ENCODE measurements at regions of chr4 and their contacts with region 1.

Region 1: GRCh38 chr4:98467627-98468072 is 190.8 kb downstream of the TSPAN5 start:
- DNase-seq: peak; percentile 56 to 85 (median 62)
- ATAC-seq: peak; percentile 97
- H3K4me3 ChIP-seq: peak overlapping the region; percentile 11; the same call in 1 of the 2 replicates
- H3K27ac ChIP-seq: no peak overlapping the region
- H3K4me1 ChIP-seq: no peaks in the 10 kb centered on the region; a peak in 3 of 5 replicates
- H3K27me3 ChIP-seq: no peaks in the 10 kb centered on the region
- CTCF ChIP-seq: peak; percentile 75 to 83 (median 83)
- EP300 ChIP-seq: no peak
- POLR2A ChIP-seq: no peak
- RAD21 ChIP-seq: peak; percentile 86 to 87

Region 2: DNA sequence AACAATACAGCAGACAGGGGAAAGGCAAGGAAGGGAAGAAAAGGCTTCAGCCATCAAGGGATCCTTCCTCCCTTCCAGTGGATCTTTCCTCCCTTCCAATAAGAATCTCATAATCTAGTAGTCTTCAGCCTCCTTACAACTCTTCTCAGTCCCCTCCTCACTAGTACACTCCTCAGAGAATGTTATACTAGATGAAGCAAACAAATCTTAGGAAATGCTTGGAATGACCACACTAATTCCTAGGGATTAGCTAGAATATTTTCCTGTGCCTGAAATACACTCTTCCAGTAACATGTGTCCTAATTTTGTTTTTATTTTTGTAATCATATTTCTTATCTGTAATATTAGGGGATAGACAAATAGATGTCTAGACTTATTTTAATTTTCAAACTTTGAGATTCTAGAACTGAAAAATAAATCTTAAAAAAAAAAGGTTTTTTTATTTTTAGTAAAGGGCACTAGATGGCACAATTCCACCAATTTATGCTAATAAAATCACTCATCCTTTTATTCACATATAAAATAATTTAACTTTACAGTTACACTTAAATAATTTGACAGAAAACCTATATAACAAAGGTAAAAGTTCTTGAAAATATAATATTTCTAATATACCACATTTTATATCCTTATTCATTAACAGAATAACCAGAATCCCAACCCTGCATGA is 317.4 kb before region 1 on chr4:
- CTCF ChIA-PET with region 1: no interaction called
- POLR2A ChIA-PET with region 1: no interaction called
- in situ Hi-C with region 1: no loop called
- intact Hi-C with region 1: loop called (anchors 10 kb)
- DNase-seq: no peak
- ATAC-seq: no peak
- H3K4me3 ChIP-seq: no peak overlapping the region
- H3K27ac ChIP-seq: no peak overlapping the region
- H3K4me1 ChIP-seq: no peaks in the 10 kb centered on the region
- H3K27me3 ChIP-seq: no peaks in the 10 kb centered on the region
- CTCF ChIP-seq: peak in 1 of 3 experiments; percentile 43; a peak in 2 of 6 replicates
- EP300 ChIP-seq: no peak
- POLR2A ChIP-seq: no peak
- RAD21 ChIP-seq: peak; percentile 40 to 50

Region 3: DNA sequence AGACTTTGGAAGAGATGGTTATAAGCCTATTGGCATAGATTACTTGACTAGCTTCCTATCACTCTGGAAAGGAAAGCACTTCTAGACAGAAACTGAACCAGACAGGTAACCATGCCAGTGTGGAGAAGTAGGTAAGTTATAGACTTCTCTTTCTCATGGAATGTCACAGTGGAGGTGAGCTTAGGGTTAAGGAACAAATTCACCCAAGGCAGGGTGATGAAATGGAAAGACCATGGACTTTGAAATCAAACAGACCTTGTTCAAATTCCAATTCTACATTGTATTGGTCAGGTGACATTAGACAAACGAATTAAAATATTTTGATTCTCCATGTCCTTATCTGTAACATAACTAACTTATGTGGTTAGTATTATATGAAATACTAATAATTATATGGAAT is 214.2 kb before region 1 on chr4:
- CTCF ChIA-PET with region 1: no interaction called
- POLR2A ChIA-PET with region 1: no interaction called
- in situ Hi-C with region 1: no loop called
- intact Hi-C with region 1: loop called (anchors 10 kb)
- DNase-seq: no peak
- ATAC-seq: no peak
- H3K4me3 ChIP-seq: no peak overlapping the region
- H3K27ac ChIP-seq: no peak overlapping the region
- H3K4me1 ChIP-seq: no peaks in the 10 kb centered on the region
- H3K27me3 ChIP-seq: no peaks in the 10 kb centered on the region; a peak in 2 of 5 replicates
- CTCF ChIP-seq: no peak
- EP300 ChIP-seq: no peak
- POLR2A ChIP-seq: no peak
- RAD21 ChIP-seq: no peak

Region 4: DNA sequence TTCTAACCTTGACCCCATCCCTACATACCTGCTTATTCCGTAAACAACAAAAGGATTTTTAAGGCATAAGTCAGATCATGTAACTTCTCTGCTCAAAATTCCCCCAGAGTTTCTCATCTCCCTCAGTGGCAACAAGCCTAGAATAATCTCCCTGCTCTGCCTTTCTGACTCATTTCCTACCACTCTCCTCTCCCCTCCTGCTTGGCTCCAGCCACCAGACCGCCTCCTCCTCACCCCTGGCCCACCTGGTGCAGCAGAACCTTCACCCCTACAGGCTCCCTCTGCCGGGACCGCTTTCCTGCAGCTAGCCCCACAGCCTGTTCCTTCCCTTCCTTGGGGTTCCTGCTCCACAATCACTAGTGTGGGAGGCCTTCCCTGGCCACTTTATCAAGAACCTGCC is 158.7 kb after region 1 on chr4:
- CTCF ChIA-PET with region 1: no interaction called
- POLR2A ChIA-PET with region 1: no interaction called
- in situ Hi-C with region 1: no loop called
- intact Hi-C with region 1: loop called (anchors 10 kb)
- DNase-seq: no peak
- ATAC-seq: peak; percentile 51; the same call in 1 of the 3 replicates
- H3K4me3 ChIP-seq: no peak overlapping the region
- H3K27ac ChIP-seq: no peak overlapping the region
- H3K4me1 ChIP-seq: no peaks in the 10 kb centered on the region
- H3K27me3 ChIP-seq: no peaks in the 10 kb centered on the region; a peak in 2 of 5 replicates
- CTCF ChIP-seq: no peak
- EP300 ChIP-seq: no peak
- POLR2A ChIP-seq: no peak
- RAD21 ChIP-seq: no peak; a peak in 1 of 4 replicates

Region 5: GRCh38 chr4:98745366-98745765 is 277.7 kb after region 1 on chr4:
- CTCF ChIA-PET with region 1: no interaction called
- POLR2A ChIA-PET with region 1: no interaction called
- in situ Hi-C with region 1: no loop called
- intact Hi-C with region 1: loop called (anchors 5 kb)
- DNase-seq: peak in 2 of 4 experiments; percentile 29 to 78
- ATAC-seq: peak; percentile 87
- H3K4me3 ChIP-seq: no peak overlapping the region
- H3K27ac ChIP-seq: no peak overlapping the region
- H3K4me1 ChIP-seq: no peaks in the 10 kb centered on the region; a peak in 1 of 5 replicates
- H3K27me3 ChIP-seq: no peaks in the 10 kb centered on the region
- CTCF ChIP-seq: peak; percentile 69 to 84 (median 72)
- EP300 ChIP-seq: no peak
- POLR2A ChIP-seq: no peak
- RAD21 ChIP-seq: peak; percentile 64 to 80

Region 6: DNA sequence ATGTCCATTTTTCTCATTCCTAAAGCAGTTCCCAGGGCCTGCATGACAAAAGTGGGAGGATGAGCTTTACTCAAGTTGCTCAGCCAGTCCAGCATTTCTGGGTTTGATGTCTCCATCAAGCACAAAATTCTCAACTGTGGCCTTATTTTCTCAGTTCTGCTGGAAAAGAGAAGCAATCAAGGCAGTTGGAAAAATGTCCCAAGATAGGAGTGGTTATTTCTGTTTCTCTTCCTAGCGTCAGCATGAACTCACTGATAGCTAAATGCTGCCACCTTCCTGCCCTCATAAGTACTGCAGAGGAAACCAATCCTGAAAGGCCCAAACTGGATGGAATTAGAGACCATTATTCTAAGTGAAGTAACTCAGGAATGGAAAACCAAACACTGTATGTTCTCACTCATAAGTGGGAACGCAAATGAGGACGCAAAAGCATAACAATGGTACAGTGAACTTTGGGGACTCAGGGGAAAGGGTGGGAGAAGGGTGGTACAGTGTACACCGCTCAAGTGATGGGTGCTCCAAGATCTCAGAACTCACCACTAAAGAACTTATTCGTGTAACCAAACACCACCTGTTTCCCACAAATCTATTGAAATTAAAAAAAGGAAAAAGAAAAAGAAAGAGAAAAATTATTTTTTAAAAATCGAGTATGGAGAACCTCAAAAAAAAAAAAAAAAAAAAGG is 937.9 kb after region 1 on chr4:
- CTCF ChIA-PET with region 1: interaction called, 4 read pairs
- POLR2A ChIA-PET with region 1: no interaction called
- in situ Hi-C with region 1: loop called (anchors 25 kb)
- intact Hi-C with region 1: loop called (anchors 1 kb)
- DNase-seq: peak; percentile 29 to 71 (median 54)
- ATAC-seq: peak; percentile 92
- H3K4me3 ChIP-seq: no peak overlapping the region
- H3K27ac ChIP-seq: no peak overlapping the region
- H3K4me1 ChIP-seq: no peaks in the 10 kb centered on the region
- H3K27me3 ChIP-seq: no peaks in the 10 kb centered on the region
- CTCF ChIP-seq: peak; percentile 73 to 88 (median 82)
- EP300 ChIP-seq: no peak
- POLR2A ChIP-seq: no peak
- RAD21 ChIP-seq: peak; percentile 90 to 93

Region 7: GRCh38 chr4:99462875-99463464 is 995.3 kb after region 1 on chr4:
- CTCF ChIA-PET with region 1: no interaction called
- POLR2A ChIA-PET with region 1: no interaction called
- in situ Hi-C with region 1: no loop called
- intact Hi-C with region 1: loop called (anchors 5 kb)
- DNase-seq: peak; percentile 66 to 72 (median 68)
- ATAC-seq: peak; percentile 97
- H3K4me3 ChIP-seq: no peak overlapping the region
- H3K27ac ChIP-seq: no peak overlapping the region
- H3K4me1 ChIP-seq: no peaks in the 10 kb centered on the region
- H3K27me3 ChIP-seq: no peaks in the 10 kb centered on the region
- CTCF ChIP-seq: peak; percentile 74 to 84 (median 79)
- EP300 ChIP-seq: no peak
- POLR2A ChIP-seq: no peak
- RAD21 ChIP-seq: peak; percentile 83 to 84

Measured in K562 (cell line).